Panc1 (cell line): ENCODE measurements at regions of chr2 and their contacts with region 1.

Region 1: DNA sequence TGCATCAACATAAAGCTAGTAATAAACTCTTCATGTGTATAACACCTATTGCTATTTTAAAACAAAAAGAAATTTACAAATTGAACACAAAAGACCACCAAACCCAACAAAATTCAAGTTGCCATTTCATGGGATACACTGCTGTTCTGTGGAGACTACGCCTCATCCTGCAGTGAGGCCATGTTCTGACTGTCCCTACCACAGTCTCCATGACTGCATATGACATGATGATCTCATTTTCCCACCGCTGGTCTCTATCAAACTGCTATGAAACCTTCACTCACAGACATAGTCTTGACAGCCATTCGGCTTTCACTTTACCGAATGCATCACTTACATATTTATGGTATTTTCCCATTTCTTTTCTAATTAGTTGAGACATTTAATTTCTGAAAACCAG is 21.2 kb upstream of the VWA3B start:
- DNase-seq: no peak
- ATAC-seq: no peak
- H3K4me3 ChIP-seq: no peak overlapping the region
- H3K27ac ChIP-seq: no peak overlapping the region
- H3K4me1 ChIP-seq: no peaks in the 10 kb centered on the region
- H3K27me3 ChIP-seq: peaks cover 4% of the 10 kb centered on the region; the same call in 1 of the 2 replicates
- CTCF ChIP-seq: no peak

Region 2: GRCh38 chr2:96157651-96158553 is 1907.9 kb before region 1 on chr2:
- CTCF ChIA-PET with region 1: interaction called, 12 read pairs
- POLR2A ChIA-PET with region 1: no interaction called
- in situ Hi-C with region 1: no loop called
- intact Hi-C with region 1: no loop called
- DNase-seq: no peak
- ATAC-seq: no peak
- H3K4me3 ChIP-seq: no peak overlapping the region
- H3K27ac ChIP-seq: no peak overlapping the region
- H3K4me1 ChIP-seq: no peaks in the 10 kb centered on the region
- H3K27me3 ChIP-seq: no peaks in the 10 kb centered on the region
- CTCF ChIP-seq: no peak

Region 3: GRCh38 chr2:97995734-97996624 is 69.8 kb before region 1 on chr2 and contains the start of gene TMEM131:
- CTCF ChIA-PET with region 1: no interaction called
- POLR2A ChIA-PET with region 1: no interaction called
- in situ Hi-C with region 1: no loop called
- intact Hi-C with region 1: no loop called
- DNase-seq: peak; percentile 69
- ATAC-seq: peak; percentile 96
- H3K4me3 ChIP-seq: peak within 1 kb of the TSS; percentile 81 to 96
- H3K27ac ChIP-seq: peak within 1 kb of the TSS; percentile 92
- H3K4me1 ChIP-seq: peaks cover 26% of the 10 kb centered on the region
- H3K27me3 ChIP-seq: no peaks in the 10 kb centered on the region
- CTCF ChIP-seq: no peak
- total RNA-seq, gene TMEM131: 43.4 TPM

Region 4: DNA sequence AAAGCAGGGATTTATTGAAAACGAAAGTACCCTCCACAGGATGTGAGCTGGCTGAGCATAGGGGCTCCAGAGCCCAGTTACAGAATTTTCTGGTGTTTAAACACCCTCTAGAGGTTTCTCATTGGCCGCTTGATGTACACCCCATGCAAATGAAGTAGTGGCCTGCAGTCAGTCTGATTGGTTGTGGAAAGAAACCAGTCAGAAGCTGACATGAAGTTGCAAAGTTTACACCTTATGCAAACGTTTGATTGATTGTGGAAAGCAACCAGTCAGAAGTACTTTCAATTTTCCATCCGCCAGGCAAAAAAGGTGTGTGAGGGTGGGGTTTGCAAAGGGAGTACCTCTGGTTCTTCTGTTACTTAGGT is 83.5 kb after region 1 on chr2:
- CTCF ChIA-PET with region 1: no interaction called
- POLR2A ChIA-PET with region 1: no interaction called
- in situ Hi-C with region 1: no loop called
- intact Hi-C with region 1: no loop called
- DNase-seq: no peak
- ATAC-seq: no peak
- H3K4me3 ChIP-seq: peak overlapping the region in 1 of 2 experiments; percentile 24; a peak in 1 of 4 replicates
- H3K27ac ChIP-seq: no peak overlapping the region
- H3K4me1 ChIP-seq: no peaks in the 10 kb centered on the region
- H3K27me3 ChIP-seq: no peaks in the 10 kb centered on the region
- CTCF ChIP-seq: no peak

Region 5: DNA sequence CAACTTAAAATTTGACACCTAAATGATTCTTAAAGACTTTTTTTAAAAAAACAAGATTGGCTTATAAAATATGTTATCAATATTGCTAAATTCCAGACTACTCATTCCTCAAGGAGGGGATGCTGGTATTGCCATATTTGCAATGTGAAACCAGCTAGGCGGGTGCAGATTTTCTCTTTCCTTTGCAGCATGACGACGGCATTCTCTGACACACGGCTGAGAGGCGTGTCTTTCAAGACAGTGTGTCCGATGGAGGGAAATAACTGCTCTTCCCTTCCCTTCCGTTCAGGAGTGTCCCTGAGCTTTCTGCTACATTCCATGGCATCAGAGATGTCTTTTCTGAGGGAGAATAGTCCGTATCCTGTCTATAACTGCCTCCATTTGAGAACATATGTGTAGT is 242.3 kb after region 1 on chr2:
- CTCF ChIA-PET with region 1: no interaction called
- POLR2A ChIA-PET with region 1: no interaction called
- in situ Hi-C with region 1: no loop called
- intact Hi-C with region 1: no loop called
- DNase-seq: no peak
- ATAC-seq: no peak
- H3K4me3 ChIP-seq: no peak overlapping the region
- H3K27ac ChIP-seq: no peak overlapping the region
- H3K4me1 ChIP-seq: no peaks in the 10 kb centered on the region
- H3K27me3 ChIP-seq: peaks cover 22% of the 10 kb centered on the region
- CTCF ChIP-seq: no peak